ENCODE measurements at regions of chr1 and their contacts with region 1.

Region 1: GRCh38 chr1:231211005-231211857 is 29.8 kb upstream of the GNPAT start:
- DNase-seq: peak; percentile 83 to 89
- H3K4me3 ChIP-seq: peak overlapping the region in 1 of 3 donors; percentile 27
- H3K27ac ChIP-seq: no peak overlapping the region
- H3K4me1 ChIP-seq: peaks cover 0 to 9% of the 10 kb centered on the region in 2 donors
- H3K27me3 ChIP-seq: no peaks in the 10 kb centered on the region
- CTCF ChIP-seq: peak; percentile 55 to 94 (median 88)
- POLR2A ChIP-seq: no peak

Region 2: GRCh38 chr1:230715510-230715909 is 495.7 kb before region 1 on chr1:
- intact Hi-C with region 1: no loop called
- DNase-seq: no peak
- H3K4me3 ChIP-seq: no peak overlapping the region
- H3K27ac ChIP-seq: no peak overlapping the region
- H3K4me1 ChIP-seq: peaks cover 0 to 7% of the 10 kb centered on the region in 2 donors
- H3K27me3 ChIP-seq: no peaks in the 10 kb centered on the region
- CTCF ChIP-seq: no peak
- POLR2A ChIP-seq: no peak

Region 3: DNA sequence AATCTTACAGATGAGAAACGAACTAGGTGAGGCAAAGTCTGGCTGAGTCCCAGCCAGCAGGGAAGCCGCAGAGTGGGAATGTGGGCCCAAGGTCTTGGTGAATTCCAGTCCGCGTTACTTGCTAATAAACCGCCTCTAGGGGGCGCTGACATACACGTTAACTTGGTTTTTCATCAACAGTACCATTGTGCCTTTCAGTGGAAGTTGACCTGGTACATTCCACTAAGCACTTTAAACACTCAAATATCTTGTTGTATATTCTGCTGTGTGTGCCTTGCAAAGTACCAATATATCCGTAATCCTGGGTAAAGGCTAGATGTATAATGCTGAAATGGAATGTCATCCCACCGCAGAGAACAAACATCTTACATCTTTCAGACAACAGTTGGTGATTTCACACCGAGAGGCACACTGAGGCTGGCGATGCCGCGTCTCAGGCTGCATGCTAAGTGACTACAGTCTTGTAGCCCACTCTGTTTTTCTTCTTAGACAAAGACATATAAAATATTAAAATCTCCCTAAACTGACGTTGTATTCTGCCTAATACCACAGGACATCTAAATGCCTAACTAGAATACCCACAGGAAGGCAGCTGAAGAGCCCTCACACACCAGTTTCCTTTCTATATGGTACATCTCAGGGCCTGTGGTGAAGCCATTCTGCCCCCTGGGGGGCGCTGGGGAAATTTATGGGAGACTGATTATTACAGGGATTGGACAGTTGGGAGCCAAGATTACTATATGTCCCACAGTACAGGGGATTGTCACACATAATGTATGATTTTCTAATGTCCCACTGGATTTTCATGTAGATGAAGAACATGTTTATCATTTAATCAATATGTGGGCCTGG is 293.7 kb before region 1 on chr1:
- intact Hi-C with region 1: loop called (anchors 5 kb)
- DNase-seq: peak; percentile 79 to 87
- H3K4me3 ChIP-seq: no peak overlapping the region
- H3K27ac ChIP-seq: no peak overlapping the region
- H3K4me1 ChIP-seq: no peaks in the 10 kb centered on the region
- H3K27me3 ChIP-seq: no peaks in the 10 kb centered on the region
- CTCF ChIP-seq: peak in 5 of 6 experiments; percentile 51 to 72 (median 51)
- POLR2A ChIP-seq: no peak

Region 4: GRCh38 chr1:231460614-231461013 is 249.4 kb after region 1 on chr1:
- intact Hi-C with region 1: no loop called
- DNase-seq: no peak
- H3K4me3 ChIP-seq: no peak overlapping the region
- H3K27ac ChIP-seq: no peak overlapping the region
- H3K4me1 ChIP-seq: no peaks in the 10 kb centered on the region
- H3K27me3 ChIP-seq: no peaks in the 10 kb centered on the region
- CTCF ChIP-seq: no peak
- POLR2A ChIP-seq: no peak

Measured in thyroid gland (tissue), 4 donors.